ENCODE measurements at regions of chr3 and their contacts with region 1.

Region 1: GRCh38 chr3:96863129-96863740 is 48.8 kb downstream of the EPHA6 start:
- DNase-seq: peak; percentile 35
- H3K4me3 ChIP-seq: no peak overlapping the region
- H3K27ac ChIP-seq: no peak overlapping the region
- H3K4me1 ChIP-seq: no peaks in the 10 kb centered on the region
- H3K27me3 ChIP-seq: no peaks in the 10 kb centered on the region
- CTCF ChIP-seq: peak; percentile 61

Region 2: GRCh38 chr3:97658668-97659285 is 795.5 kb after region 1 on chr3:
- CTCF ChIA-PET with region 1: no interaction called
- POLR2A ChIA-PET with region 1: no interaction called
- intact Hi-C with region 1: loop called (anchors 5 kb)
- DNase-seq: peak; percentile 49
- H3K4me3 ChIP-seq: no peak overlapping the region
- H3K27ac ChIP-seq: no peak overlapping the region
- H3K4me1 ChIP-seq: no peaks in the 10 kb centered on the region
- H3K27me3 ChIP-seq: no peaks in the 10 kb centered on the region
- CTCF ChIP-seq: peak; percentile 68

Region 3: GRCh38 chr3:97719156-97719821 is 856.1 kb after region 1 on chr3:
- CTCF ChIA-PET with region 1: no interaction called
- POLR2A ChIA-PET with region 1: no interaction called
- intact Hi-C with region 1: loop called (anchors 10 kb)
- DNase-seq: peak; percentile 81
- H3K4me3 ChIP-seq: no peak overlapping the region
- H3K27ac ChIP-seq: no peak overlapping the region
- H3K4me1 ChIP-seq: no peaks in the 10 kb centered on the region
- H3K27me3 ChIP-seq: no peaks in the 10 kb centered on the region
- CTCF ChIP-seq: peak; percentile 96

Region 4: GRCh38 chr3:97736928-97737327 is 873.7 kb after region 1 on chr3:
- CTCF ChIA-PET with region 1: no interaction called
- POLR2A ChIA-PET with region 1: interaction called, 31 read pairs
- intact Hi-C with region 1: no loop called
- DNase-seq: peak; percentile 55
- H3K4me3 ChIP-seq: no peak overlapping the region
- H3K27ac ChIP-seq: no peak overlapping the region
- H3K4me1 ChIP-seq: no peaks in the 10 kb centered on the region
- H3K27me3 ChIP-seq: peaks cover 39% of the 10 kb centered on the region
- CTCF ChIP-seq: no peak

Region 5: GRCh38 chr3:98022978-98023820 is 1160.0 kb after region 1 on chr3:
- CTCF ChIA-PET with region 1: no interaction called
- POLR2A ChIA-PET with region 1: no interaction called
- intact Hi-C with region 1: loop called (anchors 5 kb)
- DNase-seq: peak; percentile 85
- H3K4me3 ChIP-seq: no peak overlapping the region
- H3K27ac ChIP-seq: no peak overlapping the region
- H3K4me1 ChIP-seq: peaks cover 8% of the 10 kb centered on the region
- H3K27me3 ChIP-seq: no peaks in the 10 kb centered on the region
- CTCF ChIP-seq: peak; percentile 95

Measured in A673 (cell line).